IMR-90 (cell line): ENCODE measurements at regions of chr4 and their contacts with region 1.

Region 1: DNA sequence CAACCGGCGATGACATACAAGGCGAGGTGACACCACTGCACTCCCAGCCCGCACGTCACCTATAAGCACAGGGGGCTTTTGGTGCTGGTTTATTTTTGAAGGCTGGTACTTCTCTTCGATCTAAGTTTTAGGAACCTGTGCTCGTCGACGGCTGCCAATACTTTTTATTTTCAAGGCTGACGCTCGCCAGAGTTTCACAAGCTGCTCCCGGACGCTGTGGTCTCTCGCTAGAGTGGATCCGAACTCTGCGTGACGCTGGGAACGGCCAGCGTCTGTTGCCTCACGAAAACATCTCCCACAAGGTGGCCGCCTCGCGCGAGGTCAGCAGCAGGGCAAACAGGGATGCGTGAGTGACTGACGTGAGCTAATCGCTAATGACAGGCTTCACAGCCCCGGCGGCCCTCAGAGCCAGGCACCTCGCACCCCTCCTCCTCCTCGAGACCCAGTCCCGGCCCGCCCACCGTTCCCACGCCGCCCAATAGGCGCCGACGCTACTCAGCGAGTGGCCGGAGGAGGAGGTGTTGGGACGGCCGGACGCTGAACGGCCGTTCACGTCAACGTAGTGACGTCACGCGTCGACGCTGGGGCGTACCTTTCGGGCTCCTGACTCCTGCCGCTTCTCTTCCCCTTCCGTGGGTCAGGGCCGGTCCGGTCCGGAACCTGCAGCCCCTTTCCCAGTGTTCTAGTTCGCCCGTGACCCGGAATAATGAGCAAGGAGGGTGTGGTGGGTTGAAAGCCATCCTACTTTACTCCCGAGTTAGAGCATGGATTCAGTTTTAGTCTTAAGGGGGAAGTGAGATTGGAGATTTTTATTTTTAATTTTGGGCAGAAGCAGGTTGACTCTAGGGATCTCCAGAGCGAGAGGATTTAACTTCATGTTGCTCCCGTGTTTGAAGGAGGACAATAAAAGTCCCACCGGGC is at the start of gene CLCN3:
- DNase-seq: peak; percentile 94
- ATAC-seq: peak; percentile 94
- H3K4me3 ChIP-seq: peak within 1 kb of the TSS; percentile 87
- H3K27ac ChIP-seq: peak within 1 kb of the TSS; percentile 81
- H3K4me1 ChIP-seq: no peaks in the 10 kb centered on the region
- H3K27me3 ChIP-seq: no peaks in the 10 kb centered on the region
- CTCF ChIP-seq: 0 out of 2 replicates have a peak, but pooled peaks have one; percentile 18
- POLR2A ChIP-seq: peak; percentile 93
- RAD21 ChIP-seq: no peak
- total RNA-seq, gene CLCN3: 22.8 and 29.4 TPM in 2 replicates

Region 2: DNA sequence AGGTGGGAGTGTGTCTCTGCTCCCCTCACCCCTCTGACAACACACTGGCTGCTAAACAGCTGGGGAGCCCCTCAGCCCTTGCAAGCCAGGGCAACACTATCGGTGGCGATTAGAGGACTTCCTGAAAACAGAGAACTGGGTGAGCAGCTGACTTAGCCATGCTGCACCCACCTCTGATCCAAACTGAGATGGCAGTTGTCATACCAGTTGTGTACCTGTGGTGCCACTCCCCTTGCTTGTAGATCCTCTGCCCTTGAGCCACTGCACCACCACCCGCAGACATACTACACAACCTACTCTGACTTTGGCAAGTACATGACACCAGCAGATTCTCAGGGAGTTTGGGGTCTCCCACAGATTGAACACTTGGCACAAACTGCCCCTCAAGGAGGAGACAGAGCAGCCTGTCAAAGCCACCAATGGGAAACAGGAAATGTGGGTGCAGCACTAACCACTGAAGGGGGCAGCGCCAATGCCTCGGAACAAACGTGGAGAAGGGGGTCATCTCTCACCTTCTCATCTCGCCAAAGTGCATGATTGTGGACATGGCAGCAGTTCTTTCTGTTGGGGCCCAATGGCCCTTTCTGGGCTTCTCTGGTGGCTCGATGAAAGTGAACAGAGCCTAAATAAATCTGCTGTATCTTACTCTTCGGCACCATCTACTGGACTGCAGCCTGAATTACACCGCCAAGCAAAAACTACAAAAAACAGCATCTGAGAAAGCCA is 127.6 kb before region 1 on chr4:
- CTCF ChIA-PET with region 1: no interaction called
- POLR2A ChIA-PET with region 1: no interaction called
- dilution Hi-C with region 1: no loop called
- in situ Hi-C with region 1: no loop called
- intact Hi-C with region 1: no loop called
- DNase-seq: peak; percentile 44
- ATAC-seq: peak; percentile 96
- H3K4me3 ChIP-seq: no peak overlapping the region
- H3K27ac ChIP-seq: no peak overlapping the region
- H3K4me1 ChIP-seq: no peaks in the 10 kb centered on the region
- H3K27me3 ChIP-seq: no peaks in the 10 kb centered on the region
- CTCF ChIP-seq: peak; percentile 81
- POLR2A ChIP-seq: no peak
- RAD21 ChIP-seq: peak; percentile 83

Region 3: GRCh38 chr4:169530048-169530447 is 90.2 kb before region 1 on chr4:
- CTCF ChIA-PET with region 1: no interaction called
- POLR2A ChIA-PET with region 1: no interaction called
- dilution Hi-C with region 1: no loop called
- in situ Hi-C with region 1: no loop called
- intact Hi-C with region 1: no loop called
- DNase-seq: no peak
- ATAC-seq: no peak
- H3K4me3 ChIP-seq: no peak overlapping the region
- H3K27ac ChIP-seq: no peak overlapping the region
- H3K4me1 ChIP-seq: no peaks in the 10 kb centered on the region
- H3K27me3 ChIP-seq: no peaks in the 10 kb centered on the region
- CTCF ChIP-seq: no peak
- POLR2A ChIP-seq: no peak
- RAD21 ChIP-seq: no peak

Region 4: DNA sequence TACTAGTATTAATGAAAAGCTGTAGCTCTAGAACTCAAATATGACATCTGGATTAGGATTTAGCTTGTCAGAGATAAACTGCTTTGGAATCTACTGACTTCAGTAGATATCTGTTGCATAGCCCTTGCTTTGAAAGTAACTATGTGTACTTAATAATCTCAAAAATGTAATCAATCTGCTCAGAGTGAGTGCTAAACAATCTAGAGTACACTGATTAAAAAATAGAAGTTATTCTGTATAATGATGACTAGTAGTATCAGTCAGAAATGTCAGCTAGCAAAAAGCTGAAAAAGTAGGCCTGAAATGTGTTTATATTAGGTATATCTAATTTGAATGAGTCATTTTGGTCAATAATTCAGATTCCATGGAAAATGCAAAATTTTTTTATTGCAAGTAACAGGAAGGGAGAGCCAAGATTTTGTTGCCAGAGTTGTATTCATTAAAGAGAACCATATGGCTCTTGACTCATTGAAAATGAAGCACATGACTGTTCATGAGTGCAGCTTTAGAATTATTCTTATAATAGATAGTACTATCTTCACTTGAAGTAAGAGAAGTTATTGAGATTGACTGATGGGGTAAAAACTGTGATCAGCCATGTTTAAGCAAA is 20.1 kb after region 1 on chr4:
- CTCF ChIA-PET with region 1: interaction called, 3 read pairs
- POLR2A ChIA-PET with region 1: no interaction called
- dilution Hi-C with region 1: no loop called
- in situ Hi-C with region 1: no loop called
- intact Hi-C with region 1: loop called (anchors 2 kb)
- DNase-seq: peak; percentile 91
- ATAC-seq: peak; percentile 90
- H3K4me3 ChIP-seq: no peak overlapping the region
- H3K27ac ChIP-seq: no peak overlapping the region; the same call in 1 of the 2 replicates
- H3K4me1 ChIP-seq: 0 out of 2 replicates have a peak, but pooled peaks cover 1% of the 10 kb centered on the region
- H3K27me3 ChIP-seq: no peaks in the 10 kb centered on the region
- CTCF ChIP-seq: no peak
- POLR2A ChIP-seq: no peak
- RAD21 ChIP-seq: no peak

Region 5: GRCh38 chr4:169659716-169660670 is 39.8 kb after region 1 on chr4:
- CTCF ChIA-PET with region 1: no interaction called
- POLR2A ChIA-PET with region 1: interaction called, 3 read pairs
- dilution Hi-C with region 1: no loop called
- in situ Hi-C with region 1: no loop called
- intact Hi-C with region 1: loop called (anchors 1 kb)
- DNase-seq: peak; percentile 99
- ATAC-seq: peak; percentile 96
- H3K4me3 ChIP-seq: peak overlapping the region; percentile 61
- H3K27ac ChIP-seq: peak overlapping the region; percentile 55; the same call in 1 of the 2 replicates
- H3K4me1 ChIP-seq: 0 out of 2 replicates have a peak, but pooled peaks cover 2% of the 10 kb centered on the region
- H3K27me3 ChIP-seq: no peaks in the 10 kb centered on the region
- CTCF ChIP-seq: no peak
- POLR2A ChIP-seq: peak; percentile 87
- RAD21 ChIP-seq: no peak

Region 6: DNA sequence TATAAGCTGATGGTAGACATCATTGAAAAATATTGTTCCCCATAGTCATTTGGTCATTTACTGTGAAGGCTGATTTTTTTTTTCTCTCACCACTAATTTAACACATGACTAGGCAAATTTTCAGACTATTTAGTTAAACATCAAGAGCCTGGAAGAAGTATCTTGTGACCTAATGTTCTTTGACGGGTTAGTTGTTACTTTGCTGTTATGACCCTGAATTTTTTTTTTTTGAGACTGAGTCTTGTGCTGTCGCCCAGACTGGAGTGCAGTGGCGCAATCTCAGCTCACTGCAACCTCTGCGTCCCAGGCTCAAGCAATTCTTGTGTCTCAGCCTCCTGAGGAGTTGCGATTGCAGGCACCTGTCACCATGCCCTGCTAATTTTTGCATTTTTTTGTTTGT is 70.6 kb after region 1 on chr4:
- CTCF ChIA-PET with region 1: no interaction called
- POLR2A ChIA-PET with region 1: no interaction called
- dilution Hi-C with region 1: no loop called
- in situ Hi-C with region 1: no loop called
- intact Hi-C with region 1: no loop called
- DNase-seq: no peak
- ATAC-seq: no peak
- H3K4me3 ChIP-seq: no peak overlapping the region
- H3K27ac ChIP-seq: no peak overlapping the region
- H3K4me1 ChIP-seq: no peaks in the 10 kb centered on the region
- H3K27me3 ChIP-seq: no peaks in the 10 kb centered on the region
- CTCF ChIP-seq: no peak
- POLR2A ChIP-seq: no peak
- RAD21 ChIP-seq: no peak

Region 7: GRCh38 chr4:169757575-169758184 is 137.5 kb after region 1 on chr4 and contains the start of gene HPF1:
- CTCF ChIA-PET with region 1: no interaction called
- POLR2A ChIA-PET with region 1: no interaction called
- dilution Hi-C with region 1: no loop called
- in situ Hi-C with region 1: no loop called
- intact Hi-C with region 1: loop called (anchors 2 kb)
- DNase-seq: peak; percentile 75
- ATAC-seq: peak; percentile 95
- H3K4me3 ChIP-seq: peak within 1 kb of the TSS; percentile 81
- H3K27ac ChIP-seq: peak within 1 kb of the TSS; percentile 45; the same call in 1 of the 2 replicates
- H3K4me1 ChIP-seq: peaks cover 1% of the 10 kb centered on the region; the same call in 1 of the 2 replicates
- H3K27me3 ChIP-seq: no peaks in the 10 kb centered on the region; the same call in none of the 2 replicates
- CTCF ChIP-seq: no peak
- POLR2A ChIP-seq: no peak
- RAD21 ChIP-seq: no peak
- total RNA-seq, gene HPF1: 15.2 and 27.5 TPM in 2 replicates

Region 8: GRCh38 chr4:169791527-169792156 is 171.4 kb after region 1 on chr4:
- CTCF ChIA-PET with region 1: no interaction called
- POLR2A ChIA-PET with region 1: no interaction called
- dilution Hi-C with region 1: no loop called
- in situ Hi-C with region 1: no loop called
- intact Hi-C with region 1: loop called (anchors 2 kb)
- DNase-seq: peak; percentile 55
- ATAC-seq: peak; percentile 92
- H3K4me3 ChIP-seq: peak overlapping the region; percentile 18
- H3K27ac ChIP-seq: no peak overlapping the region
- H3K4me1 ChIP-seq: no peaks in the 10 kb centered on the region
- H3K27me3 ChIP-seq: peaks cover 2% of the 10 kb centered on the region
- CTCF ChIP-seq: peak; percentile 56
- POLR2A ChIP-seq: no peak
- RAD21 ChIP-seq: peak; percentile 16; the same call in 1 of the 2 replicates

Region 9: DNA sequence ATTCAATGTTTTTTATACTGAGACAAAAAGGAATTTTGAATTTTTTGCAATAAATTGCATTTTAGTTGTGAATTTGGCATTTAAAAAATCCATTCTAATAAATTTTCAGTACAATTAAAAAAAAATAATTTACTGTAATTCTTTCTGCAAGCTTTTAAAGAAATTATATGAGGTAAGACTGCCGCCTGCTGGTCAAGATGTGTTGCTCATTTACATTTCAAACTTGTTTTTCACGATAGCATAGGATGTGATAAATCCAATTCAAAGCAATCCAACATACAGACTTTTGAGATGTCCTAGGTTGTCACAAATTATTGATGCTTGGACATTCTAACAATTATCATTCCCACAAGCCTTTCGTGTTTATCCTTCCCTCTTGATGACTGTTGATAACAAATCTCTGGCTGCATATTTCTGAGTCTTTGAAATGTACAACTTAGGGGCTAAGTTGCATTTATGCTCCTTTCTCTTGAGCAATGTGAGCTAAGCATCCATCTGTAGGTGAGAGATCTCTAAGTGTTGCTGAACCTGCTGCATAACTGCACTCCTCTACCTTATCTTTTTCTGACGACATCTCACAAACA is 427.6 kb after region 1 on chr4:
- CTCF ChIA-PET with region 1: no interaction called
- POLR2A ChIA-PET with region 1: no interaction called
- dilution Hi-C with region 1: no loop called
- in situ Hi-C with region 1: loop called (anchors 25 kb)
- intact Hi-C with region 1: no loop called
- DNase-seq: peak; percentile 71
- ATAC-seq: no peak
- H3K4me3 ChIP-seq: no peak overlapping the region
- H3K27ac ChIP-seq: no peak overlapping the region
- H3K4me1 ChIP-seq: no peaks in the 10 kb centered on the region
- H3K27me3 ChIP-seq: peaks cover 6% of the 10 kb centered on the region
- CTCF ChIP-seq: peak; percentile 86
- POLR2A ChIP-seq: no peak
- RAD21 ChIP-seq: peak; percentile 74